ENCODE measurements at regions of chr10 and their contacts with region 1.

Region 1: GRCh38 chr10:84097787-84098353 is 41.4 kb upstream of the GHITM start:
- DNase-seq: peak; percentile 10
- ATAC-seq: peak; percentile 32; the same call in 1 of the 2 replicates
- H3K4me3 ChIP-seq: no peak overlapping the region
- H3K27ac ChIP-seq: no peak overlapping the region
- H3K4me1 ChIP-seq: no peaks in the 10 kb centered on the region
- H3K27me3 ChIP-seq: no peaks in the 10 kb centered on the region
- CTCF ChIP-seq: peak; percentile 67
- POLR2A ChIP-seq: no peak
- RAD21 ChIP-seq: peak; percentile 60

Region 2: GRCh38 chr10:83769281-83769820 is 328.5 kb before region 1 on chr10:
- CTCF ChIA-PET with region 1: no interaction called
- POLR2A ChIA-PET with region 1: no interaction called
- dilution Hi-C with region 1: no loop called
- in situ Hi-C with region 1: no loop called
- intact Hi-C with region 1: no loop called
- DNase-seq: no peak
- ATAC-seq: no peak
- H3K4me3 ChIP-seq: no peak overlapping the region
- H3K27ac ChIP-seq: no peak overlapping the region
- H3K4me1 ChIP-seq: no peaks in the 10 kb centered on the region
- H3K27me3 ChIP-seq: no peaks in the 10 kb centered on the region
- CTCF ChIP-seq: no peak
- POLR2A ChIP-seq: no peak
- RAD21 ChIP-seq: no peak

Region 3: DNA sequence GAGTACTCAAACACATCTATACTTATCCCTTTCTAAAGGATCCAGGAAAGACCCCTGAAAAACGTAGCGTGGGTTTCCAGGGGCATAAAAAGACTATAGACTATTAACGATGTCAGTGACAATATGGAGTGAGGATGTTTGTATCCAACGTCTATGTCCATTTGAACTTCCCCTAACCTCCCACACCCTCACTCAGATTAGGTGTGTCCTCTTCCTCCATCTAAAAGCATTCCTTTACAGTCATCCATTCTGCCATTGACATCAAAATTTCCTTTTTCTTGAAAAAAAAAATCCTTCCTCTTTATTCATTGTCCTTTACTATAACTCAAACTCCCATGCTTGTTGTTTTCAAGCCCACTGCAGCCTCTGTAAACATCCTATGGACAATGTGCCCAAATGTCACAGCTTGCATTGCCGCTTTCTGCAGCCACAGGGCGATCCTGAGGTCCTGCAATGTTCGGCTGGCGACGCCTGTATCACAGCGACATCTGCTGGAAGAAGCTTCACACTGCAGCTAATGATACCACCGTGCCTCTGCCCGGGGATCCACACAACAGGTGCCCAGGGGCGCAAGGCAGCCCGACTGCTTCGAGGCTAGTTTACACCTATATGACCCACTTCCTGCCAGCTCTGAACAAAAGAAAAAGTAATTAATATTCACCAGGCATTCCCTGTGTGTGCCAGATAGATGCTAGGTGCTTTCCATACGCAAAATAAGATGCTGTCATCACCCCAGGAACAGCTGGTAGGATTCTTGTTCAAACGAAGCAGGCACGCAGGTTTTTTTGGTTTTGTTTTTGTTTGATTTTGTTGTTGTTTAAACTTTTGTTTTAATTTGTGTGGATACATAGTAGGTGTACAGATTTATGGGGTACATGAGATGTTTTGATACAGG is 226.4 kb before region 1 on chr10:
- CTCF ChIA-PET with region 1: no interaction called
- POLR2A ChIA-PET with region 1: no interaction called
- dilution Hi-C with region 1: no loop called
- in situ Hi-C with region 1: no loop called
- intact Hi-C with region 1: loop called (anchors 5 kb)
- DNase-seq: peak; percentile 38
- ATAC-seq: peak; percentile 94
- H3K4me3 ChIP-seq: no peak overlapping the region
- H3K27ac ChIP-seq: no peak overlapping the region
- H3K4me1 ChIP-seq: no peaks in the 10 kb centered on the region
- H3K27me3 ChIP-seq: no peaks in the 10 kb centered on the region
- CTCF ChIP-seq: peak; percentile 84
- POLR2A ChIP-seq: no peak
- RAD21 ChIP-seq: peak; percentile 88

Region 4: DNA sequence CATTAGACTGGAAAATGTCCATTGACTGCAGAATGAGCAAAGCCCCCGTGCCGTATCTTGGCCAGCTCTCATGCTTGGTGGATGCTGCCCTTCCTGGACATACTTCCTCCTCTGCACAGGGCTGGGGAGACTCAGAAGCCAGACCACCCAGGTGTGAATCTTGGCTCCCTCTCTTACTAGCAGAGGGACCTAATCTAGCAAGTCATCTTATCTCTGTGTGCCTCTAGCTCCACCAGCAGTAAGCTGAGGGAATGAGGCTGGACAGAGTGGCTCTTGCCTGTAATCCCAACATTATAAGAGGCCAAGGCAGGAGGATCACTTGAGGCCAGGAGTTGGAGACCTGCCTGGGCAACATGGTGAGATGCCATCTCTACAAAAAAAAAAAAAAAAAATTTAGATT is 132.4 kb before region 1 on chr10:
- CTCF ChIA-PET with region 1: no interaction called
- POLR2A ChIA-PET with region 1: no interaction called
- dilution Hi-C with region 1: no loop called
- in situ Hi-C with region 1: no loop called
- intact Hi-C with region 1: no loop called
- DNase-seq: no peak
- ATAC-seq: no peak
- H3K4me3 ChIP-seq: no peak overlapping the region
- H3K27ac ChIP-seq: no peak overlapping the region
- H3K4me1 ChIP-seq: no peaks in the 10 kb centered on the region
- H3K27me3 ChIP-seq: no peaks in the 10 kb centered on the region
- CTCF ChIP-seq: no peak
- POLR2A ChIP-seq: no peak
- RAD21 ChIP-seq: no peak

Region 5: GRCh38 chr10:84054743-84055142 is 43.1 kb before region 1 on chr10:
- CTCF ChIA-PET with region 1: no interaction called
- POLR2A ChIA-PET with region 1: no interaction called
- dilution Hi-C with region 1: no loop called
- in situ Hi-C with region 1: no loop called
- intact Hi-C with region 1: no loop called
- DNase-seq: no peak
- ATAC-seq: no peak
- H3K4me3 ChIP-seq: no peak overlapping the region
- H3K27ac ChIP-seq: no peak overlapping the region
- H3K4me1 ChIP-seq: no peaks in the 10 kb centered on the region
- H3K27me3 ChIP-seq: no peaks in the 10 kb centered on the region
- CTCF ChIP-seq: no peak
- POLR2A ChIP-seq: no peak
- RAD21 ChIP-seq: no peak

Measured in IMR-90 (cell line).